CD8-positive, alpha-beta memory T cell (primary cell): ENCODE measurements at regions of chr17 and their contacts with region 1.

Region 1: GRCh38 chr17:58800240-58800908 is 44.7 kb downstream of the PPM1E start:
- DNase-seq: no peak
- H3K4me3 ChIP-seq: no peak overlapping the region
- H3K4me3 Mint-ChIP-seq: no peak overlapping the region
- H3K27ac ChIP-seq: no peak overlapping the region
- H3K27ac Mint-ChIP-seq: no peak overlapping the region
- H3K4me1 ChIP-seq: no peaks in the 10 kb centered on the region
- H3K4me1 Mint-ChIP-seq: no peaks in the 10 kb centered on the region
- H3K27me3 ChIP-seq: no peaks in the 10 kb centered on the region
- H3K27me3 Mint-ChIP-seq: peaks cover 12 to 34% of the 10 kb centered on the region in 2 donors

Region 2: GRCh38 chr17:57553991-57554825 is 1246.2 kb before region 1 on chr17:
- CTCF ChIA-PET with region 1: no interaction called
- POLR2A ChIA-PET with region 1: interaction called, 10 read pairs
- DNase-seq: no peak
- H3K4me3 ChIP-seq: no peak overlapping the region
- H3K4me3 Mint-ChIP-seq: no peak overlapping the region
- H3K27ac ChIP-seq: no peak overlapping the region
- H3K27ac Mint-ChIP-seq: peak overlapping the region in 1 of 8 donors; percentile 36
- H3K4me1 ChIP-seq: peaks cover 8% of the 10 kb centered on the region
- H3K4me1 Mint-ChIP-seq: peaks cover 15 to 60% (median 19%) of the 10 kb centered on the region in 3 donors
- H3K27me3 ChIP-seq: no peaks in the 10 kb centered on the region
- H3K27me3 Mint-ChIP-seq: no peaks in the 10 kb centered on the region